Activated naive CD4-positive, alpha-beta T cell treated with anti-CD3 and anti-CD28 coated beads for 36 hours (primary cell): ENCODE measurements at regions of chr7 and their contacts with region 1.

Region 1: DNA sequence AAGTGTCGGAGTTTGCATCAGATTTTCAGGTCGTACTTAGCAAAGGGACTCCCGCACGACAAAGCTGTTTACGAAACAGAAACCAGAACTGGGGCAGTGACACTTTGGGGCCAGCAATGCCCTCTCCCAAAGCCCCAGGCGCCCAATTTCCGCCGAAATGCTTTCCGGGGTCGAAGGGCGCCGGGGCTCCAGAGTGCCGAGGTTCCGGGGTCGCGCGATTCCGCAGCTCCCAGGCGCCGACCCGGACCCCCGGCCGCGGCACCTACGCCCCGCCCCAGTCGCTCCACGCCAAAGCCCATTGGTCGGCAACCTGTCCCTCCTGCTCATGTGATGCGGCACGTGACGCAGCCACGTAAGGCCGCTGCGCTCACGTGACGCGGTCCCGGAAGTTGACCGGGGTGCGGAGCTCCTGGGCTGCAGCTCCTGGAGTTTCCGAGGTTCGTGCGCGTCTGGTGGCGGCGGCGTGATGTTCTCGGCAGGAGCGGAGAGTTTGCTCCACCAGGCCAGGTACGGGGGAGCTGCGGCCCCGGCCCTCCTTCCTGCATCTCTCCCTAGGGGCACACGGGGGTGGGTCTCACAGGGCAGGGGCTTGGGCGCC is at the start of gene AP5Z1:
- DNase-seq: peak; percentile 94
- H3K4me3 Mint-ChIP-seq: peak within 1 kb of the TSS; percentile 98
- H3K27ac Mint-ChIP-seq: peak within 1 kb of the TSS; percentile 93
- H3K4me1 Mint-ChIP-seq: peaks cover 40% of the 10 kb centered on the region
- H3K27me3 Mint-ChIP-seq: no peaks in the 10 kb centered on the region
- total RNA-seq, gene AP5Z1: 15.3 to 18.1 TPM

Region 2: DNA sequence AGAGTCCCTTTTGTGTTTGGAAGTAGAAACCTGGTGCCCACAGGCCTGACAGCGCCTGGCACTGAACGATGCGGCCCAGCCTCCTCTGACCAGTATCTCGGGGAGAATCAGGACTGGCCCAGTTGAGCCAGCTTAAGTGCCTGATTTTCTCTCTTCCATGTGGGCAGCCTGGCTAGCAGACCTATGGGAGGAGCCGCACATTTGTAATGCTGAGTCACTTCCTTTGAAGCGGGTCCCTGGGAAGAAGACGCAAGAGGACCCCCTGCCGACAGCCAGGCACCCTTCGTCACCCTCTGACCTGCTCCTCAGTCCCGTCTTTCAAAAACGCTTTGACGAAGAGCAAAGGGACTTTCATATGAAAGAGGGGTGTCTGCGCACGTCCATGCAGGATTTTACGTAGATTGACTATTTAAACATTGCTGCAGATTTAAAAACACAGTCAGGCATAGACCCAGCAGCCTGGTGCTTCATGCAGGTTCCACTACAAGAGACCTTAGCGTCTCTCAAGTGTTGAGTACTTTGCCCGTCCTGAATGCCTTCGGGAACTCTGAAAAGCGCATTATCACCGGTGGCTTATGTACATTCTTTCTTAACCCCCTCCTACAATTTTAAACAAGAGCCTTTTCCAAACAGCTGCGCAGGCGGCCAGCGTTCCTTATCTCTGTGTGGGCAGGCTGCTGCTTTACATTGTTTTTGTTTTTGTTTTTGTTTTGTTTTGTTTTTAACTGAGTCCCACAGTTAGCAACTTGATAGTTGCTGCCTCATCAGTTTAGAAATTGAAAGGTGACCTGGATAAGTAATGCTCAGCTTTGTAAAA is 36.4 kb before region 1 on chr7:
- CTCF ChIA-PET with region 1: no interaction called
- intact Hi-C with region 1: loop called (anchors 2 kb)
- DNase-seq: peak; percentile 64
- H3K4me3 Mint-ChIP-seq: peak overlapping the region; percentile 67
- H3K27ac Mint-ChIP-seq: peak overlapping the region; percentile 84
- H3K4me1 Mint-ChIP-seq: peaks cover 50% of the 10 kb centered on the region
- H3K27me3 Mint-ChIP-seq: no peaks in the 10 kb centered on the region